ENCODE measurements at regions of chr21 and their contacts with region 1.

Region 1: DNA sequence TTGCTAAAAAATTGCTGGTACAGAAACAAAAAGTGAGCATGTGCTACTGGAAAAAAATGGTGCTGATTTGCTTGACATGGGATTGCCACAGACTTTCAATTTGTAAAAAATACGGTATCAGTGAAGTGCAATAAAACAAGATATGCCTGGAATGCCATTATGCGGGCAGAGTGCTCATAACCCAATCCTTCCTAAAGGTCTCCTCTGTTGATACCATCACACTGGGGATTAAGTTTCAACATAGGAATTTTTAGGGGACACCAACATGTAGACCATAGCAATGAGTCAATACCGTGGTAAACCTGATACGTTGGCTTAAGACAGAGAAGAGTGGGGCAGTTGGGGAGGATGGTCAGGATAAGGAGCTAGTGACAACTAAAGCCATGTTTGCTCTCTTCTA is 20.5 kb downstream of the MX1 start:
- DNase-seq: no peak
- H3K4me3 ChIP-seq: no peak overlapping the region
- H3K27ac ChIP-seq: no peak overlapping the region
- H3K4me1 ChIP-seq: no peaks in the 10 kb centered on the region
- H3K27me3 ChIP-seq: no peaks in the 10 kb centered on the region
- CTCF ChIP-seq: no peak

Region 2: DNA sequence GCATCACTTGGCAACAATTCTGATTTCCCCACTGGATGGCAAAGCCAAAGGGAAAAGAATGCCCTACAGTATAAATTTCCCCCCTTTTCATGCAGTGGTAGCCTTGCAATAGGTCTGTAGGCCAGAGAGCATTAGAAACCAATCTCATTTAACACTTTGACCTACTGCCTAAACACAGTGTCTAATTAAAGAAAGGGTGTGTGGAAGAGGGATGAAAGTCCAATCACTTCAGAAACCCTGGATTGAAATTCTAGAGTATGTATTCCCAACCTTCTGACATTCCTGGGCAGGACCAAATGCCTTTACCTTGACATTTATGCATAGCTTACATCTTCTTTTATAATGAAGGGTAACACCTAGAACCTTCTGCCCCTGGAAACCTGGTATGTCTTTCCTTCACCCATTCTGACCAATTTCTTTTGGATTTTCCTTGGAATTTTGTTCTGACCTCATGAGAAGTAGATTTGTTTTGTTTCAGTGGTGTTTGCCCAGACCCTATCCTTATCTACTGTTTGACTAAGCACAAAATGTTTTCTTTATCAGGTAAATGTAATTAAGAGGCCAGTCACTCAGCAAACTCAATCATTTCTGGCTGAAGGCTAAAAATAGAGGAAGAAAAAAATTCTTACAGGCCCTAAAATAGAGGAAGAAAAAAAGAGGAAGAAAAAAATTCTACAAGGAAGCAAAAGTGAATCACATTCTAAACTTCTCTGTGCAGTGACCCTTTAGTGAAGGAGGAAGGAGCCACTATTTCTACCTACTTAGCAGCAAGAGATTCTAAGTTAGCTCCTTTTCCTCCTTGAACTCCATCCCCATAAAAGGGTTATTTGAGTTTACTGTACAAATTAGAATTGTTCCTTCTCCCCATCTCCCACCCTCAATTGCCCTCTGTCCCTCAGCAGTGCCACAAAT is 470.1 kb before region 1 on chr21:
- CTCF ChIA-PET with region 1: no interaction called
- dilution Hi-C with region 1: no loop called
- in situ Hi-C with region 1: no loop called
- intact Hi-C with region 1: no loop called
- DNase-seq: no peak
- H3K4me3 ChIP-seq: no peak overlapping the region
- H3K27ac ChIP-seq: no peak overlapping the region
- H3K4me1 ChIP-seq: no peaks in the 10 kb centered on the region
- H3K27me3 ChIP-seq: no peaks in the 10 kb centered on the region
- CTCF ChIP-seq: no peak

Region 3: DNA sequence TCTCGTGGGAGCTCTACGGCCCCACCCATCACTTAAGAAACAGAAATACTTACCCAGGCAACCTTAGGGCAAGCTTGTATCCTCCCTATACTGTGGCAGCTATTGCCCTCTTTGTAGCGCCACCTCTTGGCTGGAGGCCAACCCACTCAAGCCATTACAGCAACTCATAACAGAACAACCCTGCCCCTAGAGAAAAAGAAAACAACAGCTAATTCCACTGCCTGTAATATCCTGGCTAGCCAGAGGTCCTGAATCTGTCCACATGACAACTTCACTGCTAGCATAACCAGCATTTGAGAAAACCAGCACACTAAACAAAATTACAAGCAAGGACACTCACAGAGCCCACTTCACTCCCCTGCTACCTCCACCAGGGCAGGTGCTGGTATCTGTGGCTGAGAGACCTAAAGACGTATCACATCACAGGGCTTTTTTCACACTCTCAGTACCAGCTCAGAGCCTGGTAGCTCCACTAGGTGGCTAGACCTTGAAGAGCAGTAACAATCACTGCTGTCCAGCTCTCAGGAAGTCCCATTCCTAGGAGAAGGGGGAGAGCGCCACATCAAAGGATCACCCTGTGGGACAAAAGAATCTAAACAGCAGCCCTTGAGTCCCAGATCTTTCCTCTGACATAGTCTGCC is 35.0 kb before region 1 on chr21:
- CTCF ChIA-PET with region 1: no interaction called
- dilution Hi-C with region 1: loop called (anchors 5 kb)
- in situ Hi-C with region 1: no loop called
- intact Hi-C with region 1: no loop called
- DNase-seq: peak; percentile 7
- H3K4me3 ChIP-seq: no peak overlapping the region
- H3K27ac ChIP-seq: no peak overlapping the region
- H3K4me1 ChIP-seq: no peaks in the 10 kb centered on the region
- H3K27me3 ChIP-seq: no peaks in the 10 kb centered on the region
- CTCF ChIP-seq: peak in 1 of 2 donors; percentile 30

Measured in mammary epithelial cell (primary cell).